Adrenal gland (tissue), 19 donors: ENCODE measurements at regions of chr19 and their contacts with region 1.

Region 1: GRCh38 chr19:6521718-6522646 is 8.8 kb upstream of the TNFSF9 start:
- DNase-seq: peak in 1 of 7 donors; percentile 40
- H3K4me3 ChIP-seq: no peak overlapping the region
- H3K27ac ChIP-seq: peak overlapping the region in 1 of 5 donors; percentile 8
- H3K4me1 ChIP-seq: peaks cover 6 to 8% of the 10 kb centered on the region in 2 donors
- H3K27me3 ChIP-seq: no peaks in the 10 kb centered on the region
- CTCF ChIP-seq: no peak
- POLR2A ChIP-seq: no peak

Region 2: DNA sequence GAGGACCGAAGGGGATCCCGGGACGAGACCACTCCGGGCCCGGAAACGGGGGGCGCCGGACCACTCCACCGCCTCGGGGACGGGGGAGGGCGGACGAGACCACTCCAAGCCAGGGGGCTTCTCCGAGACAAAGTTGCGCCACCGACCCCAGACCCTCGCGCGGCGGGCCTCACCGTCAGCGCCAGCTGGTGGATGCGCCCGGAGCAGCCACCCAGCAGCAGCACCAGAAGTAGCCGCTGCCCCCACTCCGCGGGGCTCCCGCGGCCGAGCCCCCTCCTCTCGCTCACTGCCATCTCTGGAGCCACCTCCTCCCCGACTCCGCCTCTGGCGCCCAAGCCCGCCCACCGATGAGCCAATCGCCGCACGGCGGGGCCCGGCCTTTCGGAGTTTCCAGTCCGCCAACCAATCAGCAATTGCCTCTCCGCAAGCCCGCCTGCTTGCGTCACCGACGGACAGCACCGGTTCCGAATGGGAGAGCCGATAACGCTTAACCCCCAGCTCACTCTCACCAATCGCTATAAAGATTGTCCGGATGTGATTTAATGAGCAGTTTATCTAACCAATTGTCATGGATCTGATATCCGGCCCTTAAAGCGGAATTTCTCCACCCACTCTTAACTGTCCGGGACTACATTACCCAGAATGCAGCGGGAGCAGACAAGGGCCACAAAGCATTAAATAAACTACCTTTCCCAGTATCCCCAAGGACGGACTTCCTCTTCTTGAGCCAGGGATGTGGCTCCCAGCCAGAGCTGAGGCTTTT is 215.5 kb after region 1 on chr19 and contains the start of gene GPR108:
- intact Hi-C with region 1: loop called in 1 of 2 experiments (anchors 10 kb)
- DNase-seq: peak; percentile 99 to 100 (median 100)
- H3K4me3 ChIP-seq: peak within 1 kb of the TSS; percentile 50 to 96 (median 80)
- H3K27ac ChIP-seq: peak within 1 kb of the TSS; percentile 90 to 98 (median 91)
- H3K4me1 ChIP-seq: peaks cover 26 to 41% of the 10 kb centered on the region in 2 donors
- H3K27me3 ChIP-seq: no peaks in the 10 kb centered on the region
- CTCF ChIP-seq: peak in 1 of 6 experiments; percentile 10
- POLR2A ChIP-seq: peak; percentile 49 to 63
- total RNA-seq, gene GPR108: 61.8 to 168 (median 122) TPM